Thyroid gland (tissue), 4 donors: ENCODE measurements at regions of chr1 and their contacts with region 1.

Region 1: DNA sequence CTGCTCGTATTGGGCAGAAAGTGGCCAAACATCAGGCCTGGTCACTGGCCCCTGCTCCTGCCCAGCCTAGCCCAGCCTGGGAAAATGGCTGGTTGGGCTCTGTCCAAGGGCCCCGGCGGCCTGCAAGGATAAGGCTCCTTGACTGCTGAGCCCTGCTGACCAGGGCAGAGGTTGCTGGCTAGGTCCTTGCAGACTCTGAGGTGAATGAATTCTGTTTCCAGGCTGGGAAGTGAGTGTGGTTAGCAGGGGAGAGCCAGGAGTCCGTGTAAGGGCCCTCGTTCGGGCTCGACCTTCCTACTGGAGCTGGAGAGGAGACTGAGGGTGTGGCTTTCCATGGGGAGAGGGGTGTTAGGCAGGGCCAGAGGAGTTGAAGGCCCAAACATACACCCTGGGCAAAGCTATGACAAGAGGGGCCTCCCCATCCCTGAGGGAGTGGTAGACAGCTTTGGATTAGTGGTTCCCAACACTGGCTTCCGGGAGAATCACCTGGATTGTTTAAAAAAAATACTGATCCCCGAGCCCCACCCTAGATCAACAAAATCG is 20.6 kb downstream of the CSF1 start:
- DNase-seq: peak; percentile 91 to 95
- H3K4me3 ChIP-seq: no peak overlapping the region
- H3K27ac ChIP-seq: peak overlapping the region; percentile 78 to 82 (median 78)
- H3K4me1 ChIP-seq: peaks cover 21 to 51% of the 10 kb centered on the region in 2 donors
- H3K27me3 ChIP-seq: no peaks in the 10 kb centered on the region
- CTCF ChIP-seq: peak in 3 of 6 experiments; percentile 12 to 34 (median 27)
- POLR2A ChIP-seq: peak in 1 of 2 donors; percentile 31

Region 2: GRCh38 chr1:109979489-109980091 is 48.3 kb after region 1 on chr1:
- intact Hi-C with region 1: loop called (anchors 5 kb)
- DNase-seq: no peak
- H3K4me3 ChIP-seq: no peak overlapping the region
- H3K27ac ChIP-seq: no peak overlapping the region
- H3K4me1 ChIP-seq: peaks cover 0 to 14% of the 10 kb centered on the region in 2 donors
- H3K27me3 ChIP-seq: no peaks in the 10 kb centered on the region
- CTCF ChIP-seq: no peak
- POLR2A ChIP-seq: no peak